ENCODE measurements at regions of chr11 and their contacts with region 1.

Region 1: GRCh38 chr11:93234602-93235207 is 36.9 kb upstream of the SLC36A4 start:
- DNase-seq: peak; percentile 42
- ATAC-seq: peak; percentile 99
- H3K4me3 ChIP-seq: no peak overlapping the region
- H3K27ac ChIP-seq: no peak overlapping the region
- H3K4me1 ChIP-seq: no peaks in the 10 kb centered on the region
- H3K27me3 ChIP-seq: no peaks in the 10 kb centered on the region; a peak in 1 of 4 replicates
- CTCF ChIP-seq: peak; percentile 95 to 99 (median 98); a peak in 5 of 6 replicates
- EP300 ChIP-seq: no peak
- POLR2A ChIP-seq: no peak
- RAD21 ChIP-seq: peak; percentile 98

Region 2: DNA sequence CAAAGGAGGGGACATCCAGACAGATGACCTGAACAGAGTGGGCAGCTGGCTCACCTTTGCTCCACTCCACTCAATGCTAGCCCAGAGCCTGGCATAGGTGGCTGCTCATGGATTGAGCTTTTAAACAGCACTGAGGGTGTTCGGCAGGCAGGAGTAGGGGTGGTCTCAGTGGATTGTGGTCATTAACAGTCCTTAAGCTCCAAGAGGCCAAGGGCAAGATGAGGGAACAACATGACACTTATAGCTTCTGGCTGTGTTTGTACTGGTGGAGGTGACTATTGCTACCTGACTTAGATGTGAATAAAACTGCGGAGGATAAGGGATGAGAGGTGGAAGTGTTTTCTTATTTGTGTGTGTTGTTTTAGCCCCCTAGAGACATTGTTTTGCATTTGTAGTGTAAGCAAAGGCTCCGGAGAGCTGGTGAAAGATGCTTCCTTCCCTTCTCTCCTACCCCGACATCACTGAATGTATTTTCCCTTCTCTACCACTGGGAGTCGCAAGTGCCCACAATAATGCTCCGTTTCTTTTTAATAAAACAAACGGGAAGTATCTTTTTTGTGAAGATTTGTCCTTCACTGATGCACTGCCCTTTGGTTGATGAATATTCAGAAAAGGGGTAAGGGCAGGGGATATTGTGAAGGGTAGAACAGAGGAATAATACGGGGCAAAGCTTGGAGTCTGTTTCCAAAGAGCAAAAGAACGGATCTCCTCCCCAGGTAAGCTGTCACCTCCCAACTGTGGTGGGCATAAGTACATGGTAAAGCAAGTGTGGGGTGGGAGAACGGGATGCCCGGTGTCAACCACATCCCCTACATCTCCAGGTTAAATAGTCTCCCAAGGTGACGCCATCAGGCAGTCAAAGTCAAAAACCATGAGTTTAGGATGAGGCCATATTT is 292.8 kb before region 1 on chr11:
- CTCF ChIA-PET with region 1: interaction called, 11 read pairs
- POLR2A ChIA-PET with region 1: no interaction called
- RAD21 ChIA-PET with region 1: interaction called, 5 read pairs
- SMC1A ChIA-PET with region 1: interaction called, 6 read pairs
- in situ Hi-C with region 1: loop called (anchors 5 kb)
- intact Hi-C with region 1: no loop called
- DNase-seq: no peak
- ATAC-seq: peak; percentile 80
- H3K4me3 ChIP-seq: no peak overlapping the region
- H3K27ac ChIP-seq: no peak overlapping the region
- H3K4me1 ChIP-seq: no peaks in the 10 kb centered on the region
- H3K27me3 ChIP-seq: no peaks in the 10 kb centered on the region; a peak in 1 of 4 replicates
- CTCF ChIP-seq: peak; percentile 58 to 76 (median 73); a peak in 5 of 6 replicates
- EP300 ChIP-seq: no peak
- POLR2A ChIP-seq: no peak
- RAD21 ChIP-seq: peak; percentile 83

Region 3: GRCh38 chr11:93248602-93249001 is 13.9 kb after region 1 on chr11:
- CTCF ChIA-PET with region 1: interaction called, 10 read pairs
- POLR2A ChIA-PET with region 1: no interaction called
- RAD21 ChIA-PET with region 1: interaction called, 4 read pairs
- SMC1A ChIA-PET with region 1: interaction called, 6 read pairs
- in situ Hi-C with region 1: no loop called
- intact Hi-C with region 1: no loop called
- DNase-seq: no peak
- ATAC-seq: peak; percentile 58
- H3K4me3 ChIP-seq: no peak overlapping the region
- H3K27ac ChIP-seq: no peak overlapping the region
- H3K4me1 ChIP-seq: no peaks in the 10 kb centered on the region
- H3K27me3 ChIP-seq: no peaks in the 10 kb centered on the region; a peak in 1 of 4 replicates
- CTCF ChIP-seq: peak; percentile 14 to 35 (median 32); a peak in 4 of 6 replicates
- EP300 ChIP-seq: no peak
- POLR2A ChIP-seq: no peak
- RAD21 ChIP-seq: no peak

Region 4: DNA sequence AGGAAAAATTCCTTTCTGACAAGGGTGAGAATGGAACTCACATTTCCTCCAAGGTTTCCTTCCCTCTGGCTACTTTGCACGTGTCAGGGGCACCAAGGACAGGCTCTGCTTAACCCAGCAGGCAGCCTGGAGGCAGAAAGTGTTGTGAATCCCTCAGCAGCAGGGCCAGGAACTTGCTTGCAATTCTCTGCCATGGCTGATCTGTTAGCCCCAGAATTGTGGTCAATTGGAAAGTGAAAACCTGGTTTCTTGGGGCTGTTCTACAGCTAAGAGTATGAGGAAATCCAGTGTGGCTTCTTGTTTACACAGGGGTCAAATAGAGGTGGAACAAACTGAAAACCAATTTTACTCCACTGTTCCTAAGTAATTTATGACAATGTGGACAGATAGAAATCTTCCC is 388.5 kb after region 1 on chr11:
- CTCF ChIA-PET with region 1: interaction called, 21 read pairs
- POLR2A ChIA-PET with region 1: no interaction called
- RAD21 ChIA-PET with region 1: interaction called, 11 read pairs
- SMC1A ChIA-PET with region 1: interaction called, 10 read pairs
- in situ Hi-C with region 1: no loop called
- intact Hi-C with region 1: loop called (anchors 1 kb)
- DNase-seq: peak; percentile 26
- ATAC-seq: peak; percentile 86
- H3K4me3 ChIP-seq: no peak overlapping the region
- H3K27ac ChIP-seq: no peak overlapping the region
- H3K4me1 ChIP-seq: no peaks in the 10 kb centered on the region
- H3K27me3 ChIP-seq: no peaks in the 10 kb centered on the region; a peak in 1 of 4 replicates
- CTCF ChIP-seq: no peak
- EP300 ChIP-seq: no peak
- POLR2A ChIP-seq: no peak
- RAD21 ChIP-seq: no peak

Region 5: GRCh38 chr11:93668171-93668570 is 433.5 kb after region 1 on chr11:
- CTCF ChIA-PET with region 1: interaction called, 12 read pairs
- POLR2A ChIA-PET with region 1: no interaction called
- RAD21 ChIA-PET with region 1: no interaction called
- SMC1A ChIA-PET with region 1: interaction called, 3 read pairs
- in situ Hi-C with region 1: no loop called
- intact Hi-C with region 1: no loop called
- DNase-seq: no peak
- ATAC-seq: peak; percentile 60
- H3K4me3 ChIP-seq: no peak overlapping the region
- H3K27ac ChIP-seq: peak overlapping the region; percentile 31; the same call in 1 of the 2 replicates
- H3K4me1 ChIP-seq: no peaks in the 10 kb centered on the region
- H3K27me3 ChIP-seq: no peaks in the 10 kb centered on the region
- CTCF ChIP-seq: no peak
- EP300 ChIP-seq: no peak
- POLR2A ChIP-seq: no peak
- RAD21 ChIP-seq: no peak

Region 6: GRCh38 chr11:93958991-93959390 is 724.3 kb after region 1 on chr11:
- CTCF ChIA-PET with region 1: no interaction called
- POLR2A ChIA-PET with region 1: no interaction called
- RAD21 ChIA-PET with region 1: no interaction called
- SMC1A ChIA-PET with region 1: no interaction called
- in situ Hi-C with region 1: no loop called
- intact Hi-C with region 1: no loop called
- DNase-seq: no peak
- ATAC-seq: no peak
- H3K4me3 ChIP-seq: no peak overlapping the region
- H3K27ac ChIP-seq: no peak overlapping the region
- H3K4me1 ChIP-seq: no peaks in the 10 kb centered on the region
- H3K27me3 ChIP-seq: no peaks in the 10 kb centered on the region
- CTCF ChIP-seq: no peak
- EP300 ChIP-seq: no peak
- POLR2A ChIP-seq: no peak
- RAD21 ChIP-seq: no peak

Measured in GM12878 (cell line).